Dorsolateral prefrontal cortex (tissue), 120 donors: ENCODE measurements at regions of chr9 and their contacts with region 1.

Region 1: DNA sequence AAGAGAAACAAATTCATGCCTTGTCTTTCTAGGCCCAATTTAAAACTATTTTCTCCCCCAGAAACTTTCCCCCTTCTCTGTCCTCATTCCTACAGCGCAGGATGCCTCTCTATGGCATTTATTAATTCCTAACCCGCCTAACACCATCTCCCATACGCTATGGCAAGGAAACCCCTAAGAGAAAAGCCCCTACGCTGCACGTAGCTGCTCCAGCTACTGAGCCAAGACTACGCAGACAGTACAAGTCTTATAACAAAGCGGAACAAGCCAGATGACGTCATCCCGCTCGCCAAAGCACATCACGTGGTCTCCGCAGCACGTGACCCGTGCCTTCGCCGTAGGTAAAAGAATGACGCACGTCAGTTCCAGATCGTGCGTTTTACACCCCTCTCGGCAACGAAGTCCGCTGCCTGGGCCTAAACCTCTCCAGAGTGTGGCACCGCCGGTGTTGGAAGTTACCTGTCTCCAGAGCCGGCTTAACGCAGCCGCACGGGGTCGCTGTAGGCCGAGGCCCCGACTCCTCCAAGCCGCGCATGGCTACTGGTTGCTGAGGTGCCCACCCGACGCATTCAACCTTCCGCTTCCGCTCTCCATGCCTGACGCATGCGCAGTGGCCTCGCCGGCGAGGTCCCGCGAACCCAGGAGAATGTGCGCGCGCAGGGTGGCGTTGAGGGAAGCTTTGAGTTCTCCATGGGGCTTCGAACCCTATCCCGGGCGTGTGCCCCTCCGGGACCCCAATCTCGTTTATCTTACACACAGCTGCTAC is at the start of gene TRMO:
- DNase-seq: peak; percentile 93 to 99 (median 96)
- H3K4me3 ChIP-seq: peak within 1 kb of the TSS; percentile 49 to 99 (median 77)
- H3K27ac ChIP-seq: peak within 1 kb of the TSS; percentile 93 to 100 (median 100)
- H3K27me3 ChIP-seq: no peaks in the 10 kb centered on the region
- CTCF ChIP-seq: peak; percentile 65 to 99 (median 92)
- total RNA-seq, gene TRMO: 8.6 to 30.0 (median 17.0) TPM

Region 2: DNA sequence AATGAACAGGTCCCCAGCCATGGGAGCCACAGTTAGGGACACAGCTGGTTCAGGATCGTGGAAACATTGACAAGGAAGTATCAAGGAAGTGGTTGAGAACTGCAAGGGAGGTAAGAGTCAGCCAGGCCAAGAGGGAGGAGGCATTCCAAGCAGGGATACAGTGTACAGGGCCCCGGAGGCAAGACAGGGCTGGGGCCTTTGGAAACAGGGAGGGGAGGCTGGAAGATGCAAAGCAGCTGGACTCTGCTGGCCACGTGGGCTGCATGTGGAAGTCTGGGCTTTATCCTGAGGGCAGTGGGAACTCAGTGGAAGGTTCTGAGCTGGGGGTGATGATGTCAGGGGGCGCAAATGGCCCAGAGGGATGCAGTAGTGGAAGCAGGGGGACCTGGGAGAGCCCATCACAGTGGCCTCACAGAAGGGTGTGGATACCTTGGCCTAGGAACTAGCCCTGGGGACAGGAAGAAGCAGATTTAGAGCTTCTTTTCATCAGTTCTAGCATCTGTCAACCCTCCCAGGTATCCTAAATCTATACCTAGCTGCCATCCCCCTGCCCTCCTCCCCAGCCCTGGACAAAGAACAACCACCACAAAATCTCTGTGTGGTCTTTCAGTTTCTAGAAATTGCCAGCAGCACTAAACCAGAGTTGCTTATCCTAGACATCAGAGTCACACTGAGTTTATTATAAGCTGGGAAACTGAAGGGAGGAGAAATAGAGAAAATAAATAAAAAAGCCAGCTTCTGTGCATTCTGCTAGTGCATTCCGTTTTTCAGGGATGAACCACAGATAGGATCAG is 600.2 kb before region 1 on chr9:
- intact Hi-C with region 1: no loop called
- DNase-seq: no peak
- H3K4me3 ChIP-seq: no peak overlapping the region
- H3K27ac ChIP-seq: no peak overlapping the region
- H3K27me3 ChIP-seq: no peaks in the 10 kb centered on the region
- CTCF ChIP-seq: no peak

Region 3: DNA sequence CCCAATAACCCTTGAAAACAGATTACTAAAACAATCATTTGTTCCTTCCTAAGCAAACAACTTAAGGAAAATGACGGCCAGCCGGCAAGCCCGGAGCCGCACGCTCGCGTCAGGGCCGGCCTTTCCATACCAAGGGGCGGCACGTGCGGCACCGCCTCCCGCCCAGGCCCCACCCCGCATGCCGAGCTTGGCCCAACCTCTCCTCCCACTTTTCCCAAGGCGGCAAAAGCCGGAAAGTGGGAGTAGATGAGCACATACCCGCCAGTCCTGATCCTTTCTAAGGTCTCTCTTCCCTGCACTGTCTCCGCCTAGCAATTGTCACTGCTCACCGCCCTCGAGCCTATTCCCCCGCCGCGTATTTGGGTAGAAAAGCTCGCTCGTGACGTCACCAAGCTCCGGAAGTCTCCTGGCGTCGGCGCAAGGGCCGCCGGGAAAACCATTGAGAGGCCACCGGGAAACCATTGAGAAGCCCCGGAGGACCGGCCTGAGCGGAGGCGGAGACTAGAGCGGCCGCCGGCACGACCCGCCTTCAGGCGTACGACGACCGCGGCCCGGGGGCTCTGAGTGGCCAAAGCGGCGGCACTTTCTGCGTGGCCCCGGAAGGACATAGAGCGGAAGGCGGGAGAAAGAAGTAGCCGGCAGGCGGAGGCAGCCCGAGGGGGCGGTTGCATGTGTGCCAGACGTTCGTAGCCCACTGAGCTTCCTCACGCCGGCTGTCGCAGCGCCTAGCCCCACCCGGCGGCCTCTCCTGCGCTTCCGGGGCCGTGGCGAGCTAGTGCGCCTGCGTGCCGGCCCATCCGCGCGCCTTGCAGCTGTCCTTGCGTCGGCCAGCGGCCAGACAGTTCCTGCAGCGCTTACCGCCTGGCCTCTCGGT is 288.9 kb before region 1 on chr9 and contains the starts of genes NCBP1 and TSTD2:
- intact Hi-C with region 1: loop called in 1 of 2 experiments (anchors 5 kb)
- DNase-seq: peak; percentile 93 to 98 (median 97)
- H3K4me3 ChIP-seq: peak within 1 kb of the TSS; percentile 78 to 100 (median 96)
- H3K27ac ChIP-seq: peak within 1 kb of the TSS; percentile 82 to 99 (median 96)
- H3K27me3 ChIP-seq: no peaks in the 10 kb centered on the region
- CTCF ChIP-seq: peak in 34 of 56 donors; percentile 15 to 63 (median 32)
- total RNA-seq, gene NCBP1: 17.9 to 48.7 (median 32.4) TPM
- total RNA-seq, gene TSTD2: 17.7 to 33.6 (median 25.5) TPM

Region 4: GRCh38 chr9:97830884-97831829 is 91.0 kb before region 1 on chr9:
- intact Hi-C with region 1: no loop called
- DNase-seq: no peak
- H3K4me3 ChIP-seq: no peak overlapping the region
- H3K27ac ChIP-seq: no peak overlapping the region
- H3K27me3 ChIP-seq: peaks cover 0 to 6% (median 0%) of the 10 kb centered on the region in 45 donors
- CTCF ChIP-seq: no peak

Region 5: GRCh38 chr9:97880336-97880735 is 41.8 kb before region 1 on chr9:
- intact Hi-C with region 1: no loop called
- DNase-seq: no peak
- H3K4me3 ChIP-seq: no peak overlapping the region
- H3K27ac ChIP-seq: no peak overlapping the region
- H3K27me3 ChIP-seq: no peaks in the 10 kb centered on the region
- CTCF ChIP-seq: no peak

Region 6: GRCh38 chr9:97982683-97983588 is 60.8 kb after region 1 on chr9 and contains the start of gene ANP32B:
- intact Hi-C with region 1: loop called (anchors 1 to 2 kb)
- DNase-seq: peak; percentile 83 to 95 (median 88)
- H3K4me3 ChIP-seq: peak within 1 kb of the TSS; percentile 64 to 96 (median 89)
- H3K27ac ChIP-seq: peak within 1 kb of the TSS; percentile 80 to 100 (median 98)
- H3K27me3 ChIP-seq: no peaks in the 10 kb centered on the region
- CTCF ChIP-seq: peak; percentile 49 to 98 (median 80)
- total RNA-seq, gene ANP32B: 41.2 to 135 (median 66.8) TPM

Region 7: GRCh38 chr9:98056269-98057137 is 134.4 kb after region 1 on chr9 and contains the start of gene NANS:
- intact Hi-C with region 1: loop called (anchors 2 to 5 kb)
- DNase-seq: peak; percentile 86 to 96 (median 93)
- H3K4me3 ChIP-seq: peak within 1 kb of the TSS; percentile 69 to 99 (median 91)
- H3K27ac ChIP-seq: peak within 1 kb of the TSS in 57 of 59 donors; percentile 52 to 93 (median 85)
- H3K27me3 ChIP-seq: no peaks in the 10 kb centered on the region
- CTCF ChIP-seq: peak in 19 of 56 donors; percentile 4 to 53 (median 33)
- total RNA-seq, gene NANS: 13.8 to 40.0 (median 23.9) TPM

Region 8: DNA sequence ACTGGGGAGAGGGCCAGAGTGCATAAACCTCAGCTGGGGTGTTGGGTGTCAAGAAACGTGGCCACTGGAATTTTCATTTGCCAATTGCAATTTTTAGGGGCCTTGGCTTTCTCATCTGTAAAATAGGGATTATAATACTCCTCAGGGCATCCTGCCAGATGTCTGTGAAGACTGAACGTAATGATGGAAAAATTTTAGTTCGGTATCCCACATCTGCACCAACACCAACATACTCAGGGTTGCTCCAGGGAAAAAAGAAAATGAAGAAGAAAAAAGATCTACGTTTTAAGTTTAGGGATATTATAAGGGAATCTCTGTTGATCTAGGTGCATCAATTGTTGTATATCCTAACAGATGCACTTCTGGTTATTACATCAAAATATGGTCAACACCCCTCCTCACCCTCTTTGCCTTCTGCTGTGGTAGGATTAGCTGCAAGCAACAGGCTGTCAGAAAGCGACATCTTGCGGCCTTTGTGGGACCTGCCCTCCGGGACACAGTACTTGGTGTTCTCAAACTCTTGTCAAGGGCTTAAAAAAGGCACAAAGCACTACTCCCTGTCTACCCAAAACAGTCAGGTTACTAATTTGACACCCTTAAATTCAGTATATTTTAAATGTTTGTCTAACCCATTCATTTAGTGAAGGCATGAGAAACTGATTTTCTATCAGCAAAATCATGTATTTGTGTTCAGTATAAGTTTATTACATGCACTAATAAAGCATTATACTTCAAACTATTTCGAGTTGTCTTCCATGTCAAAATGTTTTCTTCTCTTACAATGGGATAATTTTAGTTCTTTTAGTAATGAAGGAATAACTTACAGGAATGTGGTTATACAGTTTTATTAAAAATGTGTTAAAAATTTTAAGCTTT is 341.6 kb after region 1 on chr9:
- intact Hi-C with region 1: loop called in 1 of 2 experiments (anchors 2 kb)
- DNase-seq: peak; percentile 68 to 90 (median 82)
- H3K4me3 ChIP-seq: no peak overlapping the region
- H3K27ac ChIP-seq: no peak overlapping the region
- H3K27me3 ChIP-seq: no peaks in the 10 kb centered on the region
- CTCF ChIP-seq: peak; percentile 56 to 98 (median 87)